ENCODE measurements at regions of chr1 and their contacts with region 1.

Region 1: DNA sequence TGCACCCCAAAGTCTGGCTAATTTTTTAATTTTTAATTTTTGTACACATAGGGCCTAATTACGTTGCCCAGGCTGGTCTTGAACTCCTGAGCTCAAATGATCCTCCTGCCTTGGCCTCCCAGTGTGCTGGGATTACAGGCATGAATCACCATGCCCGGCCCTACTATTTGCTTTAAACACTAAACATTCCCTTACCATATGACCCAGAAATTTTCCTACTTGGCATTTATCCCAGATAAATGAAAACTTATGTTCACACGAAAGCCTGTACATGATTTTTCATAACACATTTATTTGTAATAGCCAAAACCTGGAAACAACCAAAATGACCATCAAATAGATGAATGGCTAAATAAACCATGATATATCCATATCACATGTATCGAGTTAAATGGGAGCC is 35.8 kb downstream of the NDUFS5 start:
- H3K4me3 ChIP-seq: no peak overlapping the region
- H3K27ac ChIP-seq: no peak overlapping the region
- H3K4me1 ChIP-seq: no peaks in the 10 kb centered on the region
- CTCF ChIP-seq: no peak

Region 2: DNA sequence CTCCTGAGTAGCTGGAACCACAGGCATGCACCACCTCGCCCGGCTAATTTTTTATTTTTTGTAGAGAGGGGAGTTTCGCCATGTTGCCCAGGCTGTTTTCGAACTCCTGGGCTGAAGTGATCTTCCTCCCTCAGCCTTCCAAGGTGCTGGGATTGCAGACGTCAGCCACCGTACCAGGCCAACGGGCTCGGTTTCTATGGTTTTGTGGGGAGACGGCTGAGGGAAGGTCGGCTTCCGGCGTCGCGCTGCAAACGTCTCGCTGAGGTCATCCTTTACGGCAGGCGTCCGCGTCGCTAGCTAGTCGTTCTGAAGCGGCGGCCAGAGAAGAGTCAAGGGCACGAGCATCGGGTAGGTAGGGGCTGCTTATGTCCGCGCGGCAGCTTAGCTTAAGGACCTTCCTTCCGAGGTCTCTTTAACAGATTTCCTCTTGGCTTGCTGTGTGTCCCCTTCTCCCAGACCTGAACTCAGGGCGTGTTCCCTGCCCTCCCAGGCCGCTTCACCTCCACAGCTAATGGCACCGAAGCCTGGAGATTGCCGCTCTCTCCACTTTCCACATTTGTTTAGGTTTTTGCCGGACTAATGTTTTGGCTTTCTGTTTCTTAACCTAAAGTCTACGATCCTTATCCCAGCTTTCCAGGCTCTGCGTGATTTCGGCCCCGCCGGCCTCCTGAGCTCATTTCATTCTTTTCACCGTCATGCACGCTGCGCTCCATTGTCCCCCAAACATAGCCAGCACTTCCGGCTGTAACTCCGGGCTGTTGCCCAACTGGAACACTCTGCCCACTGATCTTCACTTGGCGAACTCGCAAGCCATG is 35.7 kb before region 1 on chr1 and contains the start of gene NDUFS5:
- CTCF ChIA-PET with region 1: no interaction called
- POLR2A ChIA-PET with region 1: interaction called, 10 read pairs
- H3K4me3 ChIP-seq: peak within 1 kb of the TSS; percentile 70
- H3K27ac ChIP-seq: peak within 1 kb of the TSS; percentile 37
- H3K4me1 ChIP-seq: no peaks in the 10 kb centered on the region
- CTCF ChIP-seq: no peak

Region 3: GRCh38 chr1:39081266-39082009 is 19.5 kb after region 1 on chr1:
- CTCF ChIA-PET with region 1: no interaction called
- POLR2A ChIA-PET with region 1: no interaction called
- H3K4me3 ChIP-seq: peak overlapping the region; percentile 32
- H3K27ac ChIP-seq: no peak overlapping the region; the same call in 1 of the 2 replicates
- H3K4me1 ChIP-seq: no peaks in the 10 kb centered on the region; the same call in 1 of the 2 replicates
- CTCF ChIP-seq: no peak

Region 4: DNA sequence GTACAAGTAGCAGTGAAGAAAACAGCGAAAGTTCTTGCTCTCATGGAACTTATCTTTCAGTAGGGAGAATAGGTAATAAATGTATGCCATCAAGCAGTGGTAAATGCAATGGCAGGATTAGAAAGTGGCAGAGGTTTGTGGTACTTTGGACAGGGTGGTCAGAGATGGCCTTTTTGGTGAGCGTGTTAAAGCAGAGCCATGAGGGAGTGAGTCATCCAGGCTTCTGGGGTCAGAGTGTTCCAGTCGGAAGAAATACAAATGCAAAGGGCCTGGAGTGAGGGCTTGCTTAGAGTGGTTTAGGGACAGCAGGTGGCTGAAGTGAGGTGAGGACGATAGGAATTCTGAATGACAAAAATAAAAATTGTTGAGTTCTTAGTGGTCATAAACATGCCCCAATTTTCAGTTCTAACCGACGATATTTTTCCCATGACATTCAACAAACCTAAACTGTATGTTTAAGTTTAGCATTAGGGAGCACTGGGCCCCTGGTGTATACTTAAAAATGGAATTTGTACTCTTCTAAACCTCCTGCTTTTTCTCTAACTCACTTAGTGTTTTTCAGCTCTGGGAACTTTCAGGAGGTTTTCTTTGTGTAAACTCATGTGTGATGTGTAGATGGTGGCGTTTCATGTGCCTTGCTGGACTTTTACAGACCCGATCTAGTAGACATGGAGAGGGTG is 220.7 kb after region 1 on chr1:
- CTCF ChIA-PET with region 1: no interaction called
- POLR2A ChIA-PET with region 1: no interaction called
- H3K4me3 ChIP-seq: no peak overlapping the region
- H3K27ac ChIP-seq: no peak overlapping the region
- H3K4me1 ChIP-seq: no peaks in the 10 kb centered on the region
- CTCF ChIP-seq: no peak

Measured in HEK293 (cell line).